Dorsolateral prefrontal cortex (tissue), 120 donors: ENCODE measurements at regions of chr4 and their contacts with region 1.

Region 1: DNA sequence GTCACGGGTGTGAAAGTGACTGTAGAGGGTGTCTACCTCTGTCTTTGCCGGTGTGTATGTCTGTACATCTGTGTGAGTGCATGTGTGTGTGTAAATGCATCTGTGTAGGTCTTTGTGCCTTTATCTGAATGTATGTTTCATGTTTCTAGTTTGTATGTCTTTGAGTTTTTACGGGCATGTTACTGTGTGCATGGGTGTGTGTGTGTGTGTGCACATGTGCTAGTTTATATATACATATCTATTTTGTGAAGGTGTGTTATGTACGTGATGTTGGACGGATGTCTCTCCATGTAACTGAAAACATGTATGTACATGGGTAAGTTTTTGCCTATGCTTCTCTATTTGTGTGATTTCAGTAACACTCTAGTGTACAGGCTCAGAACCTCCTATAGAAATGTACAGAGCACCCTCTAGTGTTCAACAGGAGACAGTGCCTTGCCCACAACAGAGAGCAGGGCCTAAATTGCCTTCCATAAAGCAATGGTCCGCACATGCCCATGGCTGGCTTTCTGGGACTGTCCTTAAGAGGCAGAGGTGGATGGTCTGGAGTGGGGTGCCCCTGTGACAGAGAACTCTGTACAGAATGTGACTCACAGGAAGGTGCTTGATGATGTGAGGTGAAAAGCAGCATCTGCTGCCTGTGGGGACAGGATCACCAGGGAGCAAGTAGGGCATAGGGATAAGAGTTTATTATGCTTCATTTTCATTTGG is 343.5 kb downstream of the RAPGEF2 start:
- DNase-seq: peak in 7 of 10 donors; percentile 14 to 53 (median 41)
- H3K4me3 ChIP-seq: no peak overlapping the region
- H3K27ac ChIP-seq: peak overlapping the region in 1 of 59 donors; percentile 21
- H3K27me3 ChIP-seq: no peaks in the 10 kb centered on the region
- CTCF ChIP-seq: peak; percentile 72 to 95 (median 88)

Region 2: DNA sequence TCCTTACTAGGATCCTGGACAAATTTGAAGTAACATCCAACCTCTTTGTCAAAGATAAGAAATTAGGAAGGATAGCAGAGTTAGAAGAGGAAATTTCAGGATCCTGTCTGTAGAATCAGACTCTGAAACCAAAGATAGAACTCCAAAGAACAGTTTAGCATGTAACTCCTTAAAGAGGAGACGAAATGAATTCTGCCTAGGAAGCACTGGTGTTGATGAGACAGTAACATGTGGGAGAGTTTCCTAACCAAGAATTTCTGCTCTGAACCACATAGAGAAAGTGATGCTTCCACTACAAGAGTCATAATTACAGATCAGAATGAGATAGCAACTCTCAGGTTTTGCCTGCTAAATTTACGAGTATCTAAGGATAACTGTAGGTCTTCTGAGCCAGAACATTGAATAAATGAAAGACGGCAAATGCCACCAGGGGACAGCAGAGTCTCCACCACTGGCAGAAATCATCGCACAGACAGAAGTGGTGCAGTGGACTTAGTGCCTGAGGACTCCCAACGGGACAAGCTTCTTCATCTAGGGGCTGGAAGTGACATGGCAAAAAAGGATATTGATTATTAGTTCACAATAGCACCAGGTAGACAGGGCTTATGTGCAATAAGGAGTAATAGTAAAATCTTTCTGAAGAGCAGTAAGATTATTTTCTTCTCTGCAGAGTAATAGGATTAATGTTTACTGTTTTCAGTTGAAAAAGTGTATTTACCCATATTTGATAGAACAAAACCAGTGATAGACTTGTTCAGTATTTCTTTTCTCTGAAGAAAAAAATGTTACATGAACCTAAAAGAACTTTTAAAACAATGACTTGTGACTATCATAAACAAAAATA is 716.5 kb before region 1 on chr4:
- intact Hi-C with region 1: loop called in 1 of 2 experiments (anchors 5 kb)
- DNase-seq: peak; percentile 44 to 87 (median 68)
- H3K4me3 ChIP-seq: peak overlapping the region in 1 of 59 donors; percentile 1
- H3K27ac ChIP-seq: peak overlapping the region in 1 of 59 donors; percentile 28
- H3K27me3 ChIP-seq: no peaks in the 10 kb centered on the region
- CTCF ChIP-seq: peak; percentile 66 to 98 (median 91)

Region 3: DNA sequence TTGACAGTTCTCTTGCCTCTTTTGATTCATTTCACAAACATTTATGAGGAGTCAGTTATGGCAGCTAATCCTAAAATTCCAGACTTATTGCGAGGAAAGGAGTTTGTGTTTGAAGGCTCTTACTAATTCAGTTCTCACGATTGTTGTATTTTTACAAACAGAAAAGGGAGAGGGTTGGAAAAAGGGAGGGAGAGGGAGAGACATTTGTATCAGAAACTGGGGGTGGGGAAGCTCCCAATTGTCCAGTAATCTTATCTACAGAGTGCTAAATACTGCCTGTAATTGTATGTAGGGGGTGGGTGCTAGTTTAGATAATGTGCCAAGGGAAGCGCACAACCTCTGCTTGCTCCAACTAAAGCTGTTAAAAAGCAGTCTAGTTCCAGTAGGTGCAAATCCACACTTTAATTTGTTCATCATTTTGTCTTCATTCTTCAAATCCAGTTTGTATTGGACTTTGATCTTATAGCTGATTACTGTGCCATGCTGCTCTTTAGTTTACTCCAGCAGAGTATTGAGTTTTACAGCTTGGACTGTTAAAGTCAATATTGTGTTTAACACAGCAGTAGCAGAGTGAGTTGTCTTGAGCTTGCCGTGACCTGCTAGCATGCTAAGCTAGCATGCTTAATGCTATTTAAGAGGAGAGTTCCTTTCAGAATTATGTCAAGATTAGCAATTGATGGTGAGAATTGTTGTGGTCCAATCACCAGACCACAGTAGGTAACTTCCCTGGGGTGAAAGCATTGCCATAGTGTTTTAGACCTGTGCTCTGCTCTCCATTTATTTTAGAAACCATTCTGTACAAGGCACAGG is 663.7 kb before region 1 on chr4:
- intact Hi-C with region 1: no loop called
- DNase-seq: no peak
- H3K4me3 ChIP-seq: no peak overlapping the region
- H3K27ac ChIP-seq: peak overlapping the region in 32 of 59 donors; percentile 0 to 60 (median 22)
- H3K27me3 ChIP-seq: no peaks in the 10 kb centered on the region
- CTCF ChIP-seq: no peak

Region 4: DNA sequence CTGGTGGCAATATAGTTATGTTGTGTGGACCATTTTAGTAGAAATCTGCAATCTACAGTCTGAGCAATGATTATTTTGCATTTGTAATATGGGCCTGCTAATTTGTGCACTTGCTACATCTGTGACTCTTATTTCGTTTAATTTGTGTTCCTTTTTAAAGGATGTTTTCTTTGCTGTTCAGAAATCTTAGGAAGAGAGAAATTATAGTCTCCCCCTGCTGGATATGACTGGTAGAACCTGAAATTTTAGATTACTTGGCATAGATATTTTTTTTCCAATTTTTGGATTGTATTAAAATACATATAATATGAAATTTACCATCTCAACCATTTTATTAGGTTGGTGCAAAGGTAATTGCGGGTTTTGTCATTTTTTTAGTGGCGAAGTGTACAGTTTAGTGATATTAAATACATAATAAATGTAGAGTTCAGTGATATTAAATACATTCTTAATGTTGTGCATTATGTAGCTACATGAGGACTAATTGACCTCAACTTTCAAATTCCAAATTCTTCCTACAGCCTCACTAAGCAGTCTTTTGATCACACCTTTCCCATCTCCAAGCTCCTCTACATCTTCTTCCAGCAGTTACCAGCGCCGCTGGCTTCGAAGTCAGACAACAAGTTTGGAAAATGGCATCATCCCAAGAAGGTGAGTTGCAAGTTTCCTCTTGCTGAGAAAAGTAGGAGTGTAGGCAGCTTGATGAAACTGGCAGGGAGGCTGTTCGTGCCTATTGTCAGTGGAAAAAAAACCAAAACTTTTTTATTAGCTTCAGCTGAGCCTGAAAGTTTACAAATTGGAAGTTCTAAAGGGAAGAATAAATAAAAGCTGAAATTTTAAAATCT is 595.4 kb before region 1 on chr4:
- intact Hi-C with region 1: loop called in 1 of 2 experiments (anchors 5 kb)
- DNase-seq: no peak
- H3K4me3 ChIP-seq: no peak overlapping the region
- H3K27ac ChIP-seq: peak overlapping the region in 48 of 59 donors; percentile 0 to 74 (median 45)
- H3K27me3 ChIP-seq: no peaks in the 10 kb centered on the region
- CTCF ChIP-seq: peak; percentile 65 to 96 (median 84)

Region 5: GRCh38 chr4:159283696-159284492 is 162.5 kb before region 1 on chr4:
- intact Hi-C with region 1: loop called in 1 of 2 experiments (anchors 10 kb)
- DNase-seq: no peak
- H3K4me3 ChIP-seq: peak overlapping the region in 47 of 59 donors; percentile 9 to 58 (median 38)
- H3K27ac ChIP-seq: peak overlapping the region in 55 of 59 donors; percentile 2 to 86 (median 71)
- H3K27me3 ChIP-seq: no peaks in the 10 kb centered on the region
- CTCF ChIP-seq: no peak